A673 (cell line): ENCODE measurements at regions of chr5 and their contacts with region 1.

Region 1: DNA sequence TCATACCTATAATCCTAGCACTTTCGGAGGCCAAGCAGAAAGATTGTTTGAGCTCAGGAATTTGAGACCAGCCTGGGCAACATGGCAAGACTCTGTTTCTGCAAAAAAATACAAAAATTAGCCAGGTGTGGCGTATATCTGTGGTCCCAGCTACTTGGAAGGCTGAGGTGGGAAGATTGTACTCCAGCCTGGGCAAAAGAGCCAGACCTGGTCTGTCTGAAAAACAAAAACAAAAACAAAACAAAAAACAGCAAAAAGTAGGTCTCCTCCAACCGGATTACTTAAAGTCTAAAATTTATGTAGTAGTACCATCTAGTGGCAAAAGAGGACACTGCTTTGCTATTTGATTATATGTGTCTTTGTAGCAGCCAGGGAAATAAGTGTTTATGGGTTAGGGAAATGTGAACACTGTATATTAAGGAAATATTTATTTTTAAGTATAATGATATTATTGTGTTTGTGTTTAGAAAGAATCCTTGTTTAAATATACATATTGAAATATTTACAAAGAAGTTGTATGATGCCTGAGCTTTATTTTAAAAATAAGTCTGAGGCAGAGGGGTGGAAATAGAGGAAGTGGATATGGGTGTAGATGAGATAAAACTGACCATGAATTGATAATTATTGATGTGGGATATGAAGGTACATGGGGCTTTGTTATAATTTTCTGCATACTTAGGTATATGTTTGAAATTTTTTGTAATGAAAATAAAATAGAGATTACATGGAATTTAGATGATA is 20.0 kb downstream of the APC start:
- DNase-seq: peak; percentile 77
- H3K4me3 ChIP-seq: peak overlapping the region; percentile 17
- H3K27ac ChIP-seq: peak overlapping the region; percentile 25
- H3K4me1 ChIP-seq: peaks cover 6% of the 10 kb centered on the region
- H3K27me3 ChIP-seq: no peaks in the 10 kb centered on the region
- CTCF ChIP-seq: peak; percentile 82

Region 2: GRCh38 chr5:112174959-112175594 is 582.6 kb before region 1 on chr5:
- CTCF ChIA-PET with region 1: no interaction called
- POLR2A ChIA-PET with region 1: no interaction called
- intact Hi-C with region 1: loop called (anchors 5 kb)
- DNase-seq: peak; percentile 63
- H3K4me3 ChIP-seq: no peak overlapping the region
- H3K27ac ChIP-seq: no peak overlapping the region
- H3K4me1 ChIP-seq: no peaks in the 10 kb centered on the region
- H3K27me3 ChIP-seq: no peaks in the 10 kb centered on the region
- CTCF ChIP-seq: peak; percentile 75

Region 3: DNA sequence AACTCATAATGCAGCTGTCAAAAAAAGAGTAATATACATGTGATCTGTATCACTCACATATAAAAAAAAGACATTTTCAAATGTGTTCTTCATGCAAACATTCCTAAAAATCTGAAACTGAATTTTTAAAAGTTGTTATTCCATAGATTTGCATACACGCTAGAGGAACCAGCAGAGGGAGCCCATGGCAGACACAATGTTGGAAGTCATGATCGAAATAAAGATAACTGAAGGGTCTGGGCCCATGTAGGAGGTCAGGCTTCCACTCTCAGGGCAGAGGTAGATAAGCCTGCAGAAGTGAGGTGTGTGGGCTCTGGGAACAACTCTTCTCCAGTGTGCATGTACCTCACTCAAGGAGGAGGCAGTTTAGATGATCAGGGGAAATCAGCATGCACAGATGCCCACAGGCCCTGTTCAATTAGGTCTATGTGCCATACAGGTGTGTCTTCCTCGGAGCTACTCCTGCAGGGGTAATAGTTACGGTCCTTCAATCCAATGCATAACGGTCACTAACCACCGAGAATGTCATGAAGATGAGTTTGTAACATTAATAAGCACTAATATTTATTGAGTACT is 547.1 kb before region 1 on chr5:
- CTCF ChIA-PET with region 1: no interaction called
- POLR2A ChIA-PET with region 1: no interaction called
- intact Hi-C with region 1: loop called (anchors 10 kb)
- DNase-seq: peak; percentile 29
- H3K4me3 ChIP-seq: no peak overlapping the region
- H3K27ac ChIP-seq: no peak overlapping the region
- H3K4me1 ChIP-seq: no peaks in the 10 kb centered on the region
- H3K27me3 ChIP-seq: no peaks in the 10 kb centered on the region
- CTCF ChIP-seq: peak; percentile 69

Region 4: GRCh38 chr5:112551419-112552032 is 206.1 kb before region 1 on chr5:
- CTCF ChIA-PET with region 1: interaction called, 6 read pairs
- POLR2A ChIA-PET with region 1: no interaction called
- intact Hi-C with region 1: loop called (anchors 1 kb)
- DNase-seq: peak; percentile 68
- H3K4me3 ChIP-seq: no peak overlapping the region
- H3K27ac ChIP-seq: no peak overlapping the region
- H3K4me1 ChIP-seq: no peaks in the 10 kb centered on the region
- H3K27me3 ChIP-seq: no peaks in the 10 kb centered on the region
- CTCF ChIP-seq: peak; percentile 76

Region 5: DNA sequence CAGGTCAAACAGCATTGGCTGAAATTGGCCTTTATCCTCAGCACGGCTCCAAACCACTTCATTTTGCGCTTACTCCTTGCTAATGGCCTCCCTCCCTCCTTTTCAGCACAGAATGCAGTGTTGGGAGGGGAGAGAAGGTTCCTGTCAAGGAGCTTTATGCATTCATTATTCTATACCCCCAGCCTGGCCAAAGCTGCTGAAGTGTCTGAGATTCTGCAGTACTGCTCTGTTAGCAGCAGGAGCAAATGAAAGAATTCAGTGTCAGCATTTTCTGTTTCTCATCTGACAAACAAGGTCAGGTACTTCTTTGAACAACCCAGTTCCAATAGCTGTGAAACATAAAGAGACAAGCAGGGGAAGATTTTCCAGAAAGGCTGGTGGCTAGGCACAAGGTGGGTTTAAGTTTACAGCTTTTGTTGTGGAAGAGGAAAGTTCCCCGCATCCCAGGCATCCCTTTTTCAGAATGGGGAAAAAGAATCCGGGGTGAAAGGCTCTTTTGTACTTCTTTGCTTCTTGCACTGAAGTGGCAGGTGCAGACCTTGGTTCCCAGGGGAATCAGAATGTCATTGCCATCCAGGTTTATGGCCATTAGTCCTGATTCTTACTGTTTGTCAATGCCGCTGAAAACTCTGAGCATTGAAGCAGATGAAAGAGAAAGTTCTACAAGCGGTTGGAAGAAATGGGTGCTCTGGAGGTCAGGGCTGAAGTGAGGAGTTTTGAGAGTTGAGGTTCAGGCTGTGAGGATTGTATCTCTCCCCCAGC is 129.2 kb before region 1 on chr5:
- CTCF ChIA-PET with region 1: no interaction called
- POLR2A ChIA-PET with region 1: no interaction called
- intact Hi-C with region 1: no loop called
- DNase-seq: no peak
- H3K4me3 ChIP-seq: no peak overlapping the region
- H3K27ac ChIP-seq: no peak overlapping the region
- H3K4me1 ChIP-seq: peaks cover 12% of the 10 kb centered on the region
- H3K27me3 ChIP-seq: no peaks in the 10 kb centered on the region
- CTCF ChIP-seq: no peak

Region 6: DNA sequence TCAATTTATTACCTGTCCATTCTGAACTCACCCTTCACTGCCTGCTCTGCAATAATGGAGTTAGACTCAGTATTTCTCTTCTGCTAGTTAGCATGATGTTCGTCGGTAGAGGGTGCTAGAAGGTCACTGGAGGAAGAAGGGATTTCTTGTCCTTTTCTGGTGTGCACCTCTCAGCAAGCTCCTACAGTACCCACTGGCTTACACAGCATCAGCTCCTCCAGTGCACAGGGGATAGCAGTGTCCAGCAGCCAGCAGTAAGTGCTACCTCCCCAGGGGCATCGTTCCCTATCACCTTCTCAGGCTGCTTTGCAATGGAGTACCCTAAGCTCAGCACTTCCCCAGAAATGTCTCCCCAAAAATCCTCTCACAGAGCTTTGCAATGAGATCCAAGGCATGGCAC is 65.9 kb before region 1 on chr5:
- CTCF ChIA-PET with region 1: no interaction called
- POLR2A ChIA-PET with region 1: no interaction called
- intact Hi-C with region 1: loop called (anchors 1 kb)
- DNase-seq: peak; percentile 33
- H3K4me3 ChIP-seq: no peak overlapping the region
- H3K27ac ChIP-seq: no peak overlapping the region
- H3K4me1 ChIP-seq: peaks cover 11% of the 10 kb centered on the region
- H3K27me3 ChIP-seq: no peaks in the 10 kb centered on the region
- CTCF ChIP-seq: no peak